Activated CD8-positive, alpha-beta T cell treated with anti-CD3 and anti-CD28 coated beads for 36 hours (primary cell): ENCODE measurements at regions of chr2 and their contacts with region 1.

Region 1: DNA sequence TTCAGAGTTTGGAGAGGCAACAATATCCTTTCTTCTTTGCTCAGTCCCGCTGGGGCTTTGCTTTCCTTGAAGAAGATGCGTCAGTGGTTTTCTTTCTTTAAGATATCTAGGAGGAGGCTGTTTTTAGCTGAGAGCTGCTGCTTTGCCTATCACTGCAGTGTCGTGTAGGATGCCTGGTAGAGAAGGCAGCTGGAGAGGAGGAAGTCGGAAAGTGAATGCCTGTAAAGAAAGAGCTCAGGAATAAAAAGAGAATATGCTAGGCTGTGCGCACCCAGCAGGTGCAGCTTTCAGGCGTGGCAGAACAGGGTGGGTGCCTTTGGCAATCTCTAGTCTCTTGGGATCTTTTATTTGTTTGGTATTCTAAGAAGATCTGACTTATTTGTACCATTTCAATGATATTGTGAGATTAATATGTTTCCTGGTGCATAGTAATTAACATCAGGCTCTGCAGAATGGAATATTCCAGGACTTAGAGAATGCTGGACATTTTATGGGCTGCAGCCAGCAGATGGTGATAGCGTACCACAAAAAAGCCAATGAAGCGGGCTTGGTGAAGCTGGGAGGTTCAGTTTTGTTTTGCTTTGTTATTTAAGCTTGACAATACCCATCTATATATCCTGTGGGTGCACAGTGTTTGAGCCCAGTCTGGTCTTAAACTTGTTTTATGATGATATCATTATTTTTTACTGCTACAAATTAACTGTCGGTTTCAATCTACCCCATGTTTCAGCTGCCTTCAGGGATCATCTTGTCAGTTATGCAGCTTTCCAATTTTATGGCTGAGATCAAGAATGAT is 34.9 kb downstream of the CAVIN2 start:
- DNase-seq: peak; percentile 52
- ATAC-seq: no peak
- H3K4me3 Mint-ChIP-seq: no peak overlapping the region
- H3K27ac Mint-ChIP-seq: no peak overlapping the region
- H3K4me1 Mint-ChIP-seq: no peaks in the 10 kb centered on the region
- H3K27me3 Mint-ChIP-seq: peaks cover 12% of the 10 kb centered on the region
- CTCF ChIP-seq: peak; percentile 63

Region 2: GRCh38 chr2:191740016-191740419 is 72.0 kb before region 1 on chr2:
- CTCF ChIA-PET with region 1: no interaction called
- POLR2A ChIA-PET with region 1: no interaction called
- intact Hi-C with region 1: no loop called
- DNase-seq: peak; percentile 73
- ATAC-seq: peak; percentile 95
- H3K4me3 Mint-ChIP-seq: no peak overlapping the region
- H3K27ac Mint-ChIP-seq: peak overlapping the region; percentile 63
- H3K4me1 Mint-ChIP-seq: peaks cover 15% of the 10 kb centered on the region
- H3K27me3 Mint-ChIP-seq: peaks cover 8% of the 10 kb centered on the region
- CTCF ChIP-seq: no peak

Region 3: DNA sequence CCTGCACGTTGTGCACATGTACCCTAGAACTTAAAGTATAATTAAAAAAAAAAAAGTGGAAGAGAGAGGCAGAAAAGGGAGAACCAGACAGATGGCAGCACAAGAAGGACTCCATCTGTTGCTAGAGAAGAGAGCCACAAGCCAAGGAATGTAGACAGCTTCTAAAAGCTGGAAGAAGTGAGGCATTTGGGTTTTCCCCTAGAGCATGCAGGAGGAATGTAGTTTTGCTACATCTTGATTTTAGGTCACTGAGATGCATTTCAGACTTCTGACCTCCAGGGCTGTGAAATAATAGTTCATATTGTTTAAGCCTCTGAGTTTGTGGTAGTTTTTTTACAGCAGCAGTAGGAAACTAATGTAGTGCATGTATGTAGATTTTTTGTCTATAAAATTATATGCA is 11.1 kb before region 1 on chr2:
- CTCF ChIA-PET with region 1: interaction called, 15 read pairs
- POLR2A ChIA-PET with region 1: no interaction called
- intact Hi-C with region 1: no loop called
- DNase-seq: no peak
- ATAC-seq: no peak
- H3K4me3 Mint-ChIP-seq: no peak overlapping the region
- H3K27ac Mint-ChIP-seq: no peak overlapping the region
- H3K4me1 Mint-ChIP-seq: no peaks in the 10 kb centered on the region
- H3K27me3 Mint-ChIP-seq: peaks cover 4% of the 10 kb centered on the region
- CTCF ChIP-seq: no peak

Region 4: DNA sequence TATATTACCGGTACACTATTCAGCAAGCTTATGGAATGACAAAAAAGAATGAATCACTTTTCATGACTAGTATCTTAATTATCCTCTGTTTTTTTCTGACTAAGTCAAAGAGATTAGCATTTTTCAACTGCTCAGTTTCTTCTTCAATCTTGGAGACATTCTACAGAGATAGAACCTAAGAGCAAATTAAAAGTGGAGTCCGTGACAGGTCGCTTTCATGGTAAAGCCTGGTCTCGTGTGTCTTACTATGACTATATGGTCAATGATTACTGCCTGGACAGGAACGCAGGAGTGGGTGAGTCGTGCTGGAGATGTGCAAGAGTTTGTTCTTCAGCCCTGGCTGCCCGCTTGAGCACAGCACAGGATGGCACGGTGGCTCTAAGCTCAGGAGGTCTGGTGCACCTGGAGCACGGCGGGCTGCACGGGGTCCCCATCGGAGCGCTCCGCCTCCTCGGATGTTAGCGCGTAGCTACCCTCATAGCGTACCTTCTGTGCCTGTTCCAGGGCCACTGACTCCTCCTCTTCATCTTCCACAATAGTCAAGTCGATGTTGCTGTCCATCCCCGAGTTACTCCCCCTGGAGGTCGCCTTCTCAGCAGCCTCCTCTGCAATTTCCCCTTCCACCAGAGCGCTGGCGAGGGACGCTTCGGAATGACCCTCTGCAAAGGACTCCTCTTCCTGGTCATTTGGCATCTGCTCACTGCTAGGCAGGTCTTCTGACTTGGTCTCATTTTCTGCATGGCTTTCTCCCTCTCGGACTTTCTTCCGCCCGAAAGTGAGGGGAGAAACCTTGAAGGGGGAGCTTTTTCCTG is 23.7 kb after region 1 on chr2:
- CTCF ChIA-PET with region 1: interaction called, 10 read pairs
- POLR2A ChIA-PET with region 1: no interaction called
- intact Hi-C with region 1: no loop called
- DNase-seq: no peak
- ATAC-seq: no peak
- H3K4me3 Mint-ChIP-seq: no peak overlapping the region
- H3K27ac Mint-ChIP-seq: no peak overlapping the region
- H3K4me1 Mint-ChIP-seq: no peaks in the 10 kb centered on the region
- H3K27me3 Mint-ChIP-seq: peaks cover 10% of the 10 kb centered on the region
- CTCF ChIP-seq: no peak

Region 5: DNA sequence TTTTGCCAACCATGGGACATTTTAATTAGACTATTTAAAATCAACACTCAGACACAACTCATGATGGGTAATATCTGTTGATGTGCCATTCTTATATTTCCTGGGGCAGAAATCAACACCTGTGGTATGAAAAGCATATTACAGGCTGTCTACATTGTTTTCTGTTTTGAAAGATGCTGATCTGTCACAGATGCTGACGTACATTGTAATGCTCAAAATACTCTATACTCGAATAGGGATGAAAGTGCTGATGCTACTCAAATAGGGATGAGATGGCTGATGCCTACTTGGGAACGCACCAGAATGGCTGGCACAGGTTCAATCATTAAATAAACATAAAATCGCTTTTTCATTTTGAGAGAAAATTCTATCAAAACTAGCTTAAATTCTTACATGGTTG is 341.6 kb after region 1 on chr2:
- CTCF ChIA-PET with region 1: interaction called, 12 read pairs
- POLR2A ChIA-PET with region 1: no interaction called
- intact Hi-C with region 1: no loop called
- DNase-seq: no peak
- ATAC-seq: no peak
- H3K4me3 Mint-ChIP-seq: no peak overlapping the region
- H3K27ac Mint-ChIP-seq: no peak overlapping the region
- H3K4me1 Mint-ChIP-seq: no peaks in the 10 kb centered on the region
- H3K27me3 Mint-ChIP-seq: peaks cover 7% of the 10 kb centered on the region
- CTCF ChIP-seq: no peak